ENCODE measurements at regions of chr15 and their contacts with region 1.

Region 1: DNA sequence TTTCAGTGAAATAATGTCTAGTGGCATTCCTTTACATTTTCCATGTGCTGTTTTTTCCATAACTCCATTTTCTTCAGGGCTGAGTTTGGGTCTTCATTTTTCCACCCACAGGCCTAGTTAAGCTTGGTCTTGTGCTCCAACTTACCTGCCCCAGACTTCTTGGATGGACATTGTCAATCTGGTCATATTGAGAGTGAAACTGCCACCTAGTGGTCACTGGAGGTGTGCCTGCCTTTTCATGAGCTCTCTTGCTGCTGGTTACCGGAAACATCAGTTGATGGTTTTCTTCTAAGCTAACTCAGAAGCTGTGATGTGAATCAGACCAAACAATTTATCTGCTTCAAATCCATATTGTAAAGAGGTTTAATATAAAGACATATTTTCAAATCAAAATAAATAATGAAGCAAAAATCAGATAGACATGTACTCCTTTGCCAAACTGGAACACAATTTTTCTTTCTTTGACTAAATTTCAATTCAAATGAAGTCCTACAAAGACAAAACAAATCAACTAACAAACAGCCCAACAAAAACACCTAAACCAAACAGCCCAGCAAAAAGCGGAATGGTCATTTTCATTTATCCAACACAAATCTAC is 135.1 kb upstream of the RASGRP1 start:
- DNase-seq: peak; percentile 63
- H3K4me3 Mint-ChIP-seq: peak overlapping the region; percentile 43
- H3K27ac Mint-ChIP-seq: peak overlapping the region; percentile 76
- H3K4me1 Mint-ChIP-seq: peaks cover 70% of the 10 kb centered on the region
- H3K27me3 Mint-ChIP-seq: no peaks in the 10 kb centered on the region

Region 2: DNA sequence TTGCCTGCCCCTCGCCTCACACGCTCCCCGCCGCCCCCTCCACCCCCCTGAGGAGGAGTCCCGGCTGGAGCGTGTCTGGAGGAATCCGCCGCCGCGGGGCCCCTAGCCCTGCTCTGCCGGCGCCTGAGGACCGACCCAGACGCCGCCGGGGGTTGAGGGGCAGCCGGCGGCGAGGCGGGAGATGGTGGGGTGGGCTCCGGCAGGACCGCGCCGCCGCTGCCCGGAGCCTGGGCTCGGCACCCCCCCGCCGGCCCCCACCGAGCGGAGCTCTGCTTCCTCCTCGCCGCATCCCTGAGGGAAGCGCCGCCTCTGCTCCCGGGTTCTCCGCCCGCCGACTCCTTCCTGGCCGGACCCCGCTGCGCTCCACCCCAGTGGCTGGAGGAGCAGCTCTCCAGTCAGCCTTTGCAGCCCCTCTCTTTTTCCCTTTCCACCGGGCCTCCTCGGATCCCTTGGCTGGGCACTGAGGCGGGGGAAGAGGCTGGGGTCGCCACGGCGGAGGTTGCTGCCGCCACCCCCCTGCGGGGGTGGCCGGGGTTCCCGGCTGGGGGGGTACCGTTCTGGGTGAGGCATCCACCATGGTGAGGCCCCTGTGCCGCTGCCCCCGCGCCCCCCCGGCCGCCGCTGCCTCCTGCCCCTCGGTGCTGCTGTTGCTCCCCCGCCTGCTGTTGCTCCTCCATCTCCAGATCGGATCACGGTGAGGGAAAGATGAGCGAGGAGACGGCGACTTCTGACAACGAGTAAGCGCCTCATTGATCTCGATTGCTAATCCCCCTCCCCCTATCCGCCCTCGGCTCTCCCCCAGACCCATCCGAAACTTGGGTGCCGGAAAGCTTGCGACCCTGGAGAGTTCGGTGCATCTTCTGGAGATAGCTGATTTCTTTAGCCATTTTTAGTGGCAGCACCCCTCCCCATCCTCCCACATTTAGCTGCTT is 447.0 kb before region 1 on chr15 and contains the start of gene SPRED1:
- intact Hi-C with region 1: loop called (anchors 10 kb)
- DNase-seq: no peak
- H3K4me3 Mint-ChIP-seq: peak within 1 kb of the TSS; percentile 79
- H3K27ac Mint-ChIP-seq: peak within 1 kb of the TSS; percentile 69
- H3K4me1 Mint-ChIP-seq: peaks cover 27% of the 10 kb centered on the region
- H3K27me3 Mint-ChIP-seq: peaks cover 68% of the 10 kb centered on the region
- total RNA-seq, gene SPRED1: 0.49 and 0.54 TPM in 2 replicates

Region 3: GRCh38 chr15:38453971-38454695 is 245.6 kb before region 1 on chr15 and contains the start of gene FAM98B:
- intact Hi-C with region 1: loop called (anchors 1 kb)
- DNase-seq: peak; percentile 85
- H3K4me3 Mint-ChIP-seq: peak within 1 kb of the TSS; percentile 96
- H3K27ac Mint-ChIP-seq: peak within 1 kb of the TSS; percentile 95
- H3K4me1 Mint-ChIP-seq: peaks cover 22% of the 10 kb centered on the region
- H3K27me3 Mint-ChIP-seq: peaks cover 19% of the 10 kb centered on the region
- total RNA-seq, gene FAM98B: 64.4 and 66.9 TPM in 2 replicates

Region 4: DNA sequence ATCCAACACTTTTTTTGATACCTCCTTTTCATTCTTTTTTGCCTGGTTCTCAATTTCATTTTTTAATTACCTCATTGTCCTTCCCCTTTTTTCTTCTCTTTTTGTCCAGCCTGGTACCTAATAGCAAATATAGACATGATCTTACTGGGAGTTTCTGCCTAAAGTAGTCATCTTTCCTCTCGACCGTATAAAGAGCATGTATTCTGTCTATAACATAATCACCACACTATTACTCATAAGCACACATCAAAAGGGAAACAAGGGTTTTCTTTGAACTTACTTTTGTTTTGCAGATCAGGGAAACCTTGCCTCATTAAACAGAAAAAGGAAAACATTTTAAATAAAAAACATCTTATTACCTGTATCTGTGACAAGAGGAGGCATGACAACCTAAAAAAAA is 212.8 kb before region 1 on chr15:
- intact Hi-C with region 1: loop called (anchors 5 kb)
- DNase-seq: no peak
- H3K4me3 Mint-ChIP-seq: peak overlapping the region; percentile 17
- H3K27ac Mint-ChIP-seq: peak overlapping the region; percentile 90
- H3K4me1 Mint-ChIP-seq: peaks cover 47% of the 10 kb centered on the region
- H3K27me3 Mint-ChIP-seq: no peaks in the 10 kb centered on the region

Region 5: DNA sequence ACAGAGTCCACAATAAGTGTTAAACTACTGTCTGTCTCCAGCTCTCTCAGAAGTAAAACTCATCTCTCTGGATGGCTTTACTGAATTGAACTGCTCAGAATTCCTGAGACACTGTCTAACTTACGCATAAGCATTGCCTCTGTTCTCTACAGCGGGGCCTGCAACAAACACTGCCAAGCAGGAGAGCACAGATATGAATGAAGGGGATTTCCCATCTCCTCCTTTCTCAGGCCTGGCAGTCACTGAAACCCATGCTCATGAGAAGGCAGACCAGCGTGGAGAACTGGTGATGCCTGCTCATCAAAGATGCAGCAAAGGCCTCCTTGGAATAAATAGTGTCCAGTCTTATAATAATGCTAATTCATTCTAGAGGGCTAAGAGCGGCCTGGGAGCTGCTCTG is 145.4 kb before region 1 on chr15:
- intact Hi-C with region 1: no loop called
- DNase-seq: no peak
- H3K4me3 Mint-ChIP-seq: peak overlapping the region; percentile 96
- H3K27ac Mint-ChIP-seq: peak overlapping the region; percentile 93
- H3K4me1 Mint-ChIP-seq: peaks cover 87% of the 10 kb centered on the region
- H3K27me3 Mint-ChIP-seq: no peaks in the 10 kb centered on the region

Region 6: DNA sequence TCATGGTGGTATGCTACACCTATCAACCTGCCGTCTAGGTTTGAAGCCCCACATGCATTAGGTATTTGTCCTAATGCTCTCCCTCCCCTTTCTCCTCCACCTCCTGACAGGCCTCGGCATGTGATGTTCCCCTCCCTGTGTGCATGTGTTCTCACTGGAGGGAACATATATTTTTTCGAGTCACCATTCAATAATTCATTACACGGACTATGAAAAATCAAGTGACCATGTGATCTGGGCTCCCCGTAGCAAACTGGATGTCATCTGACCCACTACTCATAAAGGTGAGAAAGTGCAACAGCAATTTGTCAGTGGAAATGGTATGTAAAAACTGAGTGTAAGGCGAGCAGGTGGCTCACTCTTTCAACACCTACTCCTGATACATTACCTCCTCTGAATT is 89.2 kb after region 1 on chr15:
- intact Hi-C with region 1: no loop called
- DNase-seq: no peak
- H3K4me3 Mint-ChIP-seq: no peak overlapping the region
- H3K27ac Mint-ChIP-seq: no peak overlapping the region
- H3K4me1 Mint-ChIP-seq: no peaks in the 10 kb centered on the region
- H3K27me3 Mint-ChIP-seq: peaks cover 5% of the 10 kb centered on the region

Region 7: DNA sequence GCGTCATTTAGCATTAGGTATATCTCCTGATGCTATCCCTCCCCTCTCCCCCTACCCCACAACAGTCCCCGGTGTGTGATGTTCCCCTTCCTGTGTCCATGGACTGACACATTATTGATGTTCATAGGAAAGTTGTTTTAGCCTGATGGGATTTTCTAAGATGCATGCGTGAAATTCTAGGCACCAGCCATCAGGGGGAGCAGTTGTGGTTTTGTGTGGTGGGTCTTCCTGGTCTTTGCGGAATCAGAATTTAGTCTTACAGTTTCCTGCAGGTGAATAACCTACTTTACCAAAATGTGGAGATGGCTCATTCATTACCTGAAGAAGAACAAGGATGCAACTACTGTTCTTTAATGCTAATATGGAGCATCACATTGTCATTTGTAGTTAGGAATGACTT is 426.2 kb after region 1 on chr15:
- intact Hi-C with region 1: loop called (anchors 5 kb)
- DNase-seq: peak; percentile 15
- H3K4me3 Mint-ChIP-seq: no peak overlapping the region
- H3K27ac Mint-ChIP-seq: no peak overlapping the region
- H3K4me1 Mint-ChIP-seq: peaks cover 19% of the 10 kb centered on the region
- H3K27me3 Mint-ChIP-seq: peaks cover 7% of the 10 kb centered on the region

Measured in activated T-helper 1 cell treated with anti-CD3 and anti-CD28 coated beads, Interleukin-12 subunit alpha, Interleukin-12 subunit beta, Interleukin-2, Interleukin-4 antibody, amounts not matched to agents 30 ng/mL and 10 ng/mL and 1 ng/mL, durations not matched to agents 14 hours and 24 hours and 36 hours (primary cell).